ENCODE measurements at regions of chr4 and their contacts with region 1.

Region 1: DNA sequence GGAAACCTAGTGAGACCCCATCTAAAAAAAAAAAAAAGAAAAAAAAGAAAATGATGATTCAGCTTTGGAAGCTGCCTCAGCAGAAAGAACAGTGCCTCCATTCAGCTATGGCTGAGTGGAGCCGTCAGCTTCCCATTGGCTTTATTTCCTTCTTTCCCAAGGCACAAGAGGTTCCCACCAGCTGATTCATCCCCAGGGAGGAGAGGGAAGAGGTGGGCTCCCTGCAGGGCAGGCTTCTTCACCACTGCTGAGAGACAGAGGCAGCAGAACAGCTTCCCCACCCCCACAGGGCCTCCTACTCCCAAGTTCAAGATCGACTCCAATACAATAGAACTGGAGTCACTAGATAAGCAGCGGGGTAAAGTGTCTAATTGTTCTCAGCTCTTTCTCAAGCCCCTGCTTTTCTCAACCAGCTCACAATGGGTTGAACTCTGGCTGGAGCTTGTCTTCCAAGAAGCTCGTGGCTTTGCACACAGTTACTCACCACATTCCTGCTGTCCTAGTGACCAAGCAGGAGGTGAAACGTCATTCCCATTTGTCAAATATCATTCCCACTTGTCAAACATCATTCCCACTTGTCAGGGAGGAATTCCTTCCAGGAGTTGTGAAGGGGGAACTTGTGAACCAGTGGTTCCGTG is 47.8 kb downstream of the FHDC1 start:
- DNase-seq: peak; percentile 41 to 77
- H3K4me3 ChIP-seq: no peak overlapping the region
- H3K27ac ChIP-seq: peak overlapping the region; percentile 80
- H3K4me1 ChIP-seq: peaks cover 56% of the 10 kb centered on the region
- H3K27me3 ChIP-seq: no peaks in the 10 kb centered on the region
- CTCF ChIP-seq: no peak

Region 2: DNA sequence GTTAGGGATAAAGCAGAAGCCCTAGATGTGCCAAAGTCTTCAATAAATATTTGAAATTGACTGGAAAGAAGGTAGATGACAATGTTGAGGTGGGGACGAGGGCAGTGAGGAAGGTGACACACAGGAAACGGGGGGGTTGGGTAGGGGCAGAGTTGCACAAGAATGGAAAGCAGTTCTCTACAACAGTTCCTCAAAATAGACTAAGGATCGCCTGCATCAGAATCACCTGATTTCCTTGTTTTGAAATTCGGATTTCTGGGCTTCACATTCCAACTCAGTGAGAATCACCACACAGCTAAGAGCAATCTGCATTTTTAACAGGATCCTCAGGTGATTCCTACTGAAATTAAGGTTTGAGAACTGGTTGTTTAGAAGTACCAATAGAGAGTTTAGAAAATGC is 133.5 kb before region 1 on chr4:
- CTCF ChIA-PET with region 1: interaction called, 3 read pairs
- POLR2A ChIA-PET with region 1: no interaction called
- intact Hi-C with region 1: loop called (anchors 1 kb)
- DNase-seq: peak; percentile 19 to 64
- H3K4me3 ChIP-seq: no peak overlapping the region
- H3K27ac ChIP-seq: peak overlapping the region; percentile 74
- H3K4me1 ChIP-seq: peaks cover 20% of the 10 kb centered on the region
- H3K27me3 ChIP-seq: no peaks in the 10 kb centered on the region
- CTCF ChIP-seq: no peak

Region 3: DNA sequence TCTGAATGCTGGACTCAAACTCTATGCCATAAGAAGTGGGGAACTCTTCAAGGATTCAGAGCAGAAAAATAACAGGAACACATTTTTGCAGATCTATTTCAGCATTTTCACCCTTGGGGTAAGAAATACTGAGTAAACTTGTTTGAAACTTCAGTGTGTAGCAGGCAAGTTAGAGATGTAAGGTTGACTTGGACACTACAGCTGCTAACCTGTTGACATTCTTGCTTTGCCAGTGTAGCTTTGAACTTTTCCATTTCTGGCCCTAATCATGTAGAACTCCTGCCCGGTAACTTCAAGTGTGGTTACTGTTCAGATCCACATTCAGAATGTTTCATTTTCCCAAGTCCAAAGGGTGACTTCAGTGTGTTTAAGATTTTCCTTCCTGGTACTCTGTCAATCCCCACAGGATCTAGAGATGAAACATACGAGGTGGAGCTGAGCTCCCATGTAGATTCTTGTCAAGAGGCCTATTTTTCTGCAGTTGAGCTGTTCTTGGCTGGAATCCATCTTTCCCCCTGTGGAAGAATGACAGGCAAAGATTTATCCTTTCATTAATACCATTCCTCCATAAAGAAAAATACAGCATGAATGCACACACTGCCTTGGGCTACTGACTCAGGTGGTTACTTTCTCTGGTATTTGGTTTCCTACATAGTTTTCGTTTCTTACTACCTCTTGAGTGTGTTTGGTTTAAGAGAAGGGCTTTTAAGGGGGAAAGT is 13.6 kb before region 1 on chr4:
- CTCF ChIA-PET with region 1: interaction called, 3 read pairs
- POLR2A ChIA-PET with region 1: interaction called, 9 read pairs
- intact Hi-C with region 1: loop called (anchors 1 kb)
- DNase-seq: peak; percentile 77 to 92
- H3K4me3 ChIP-seq: no peak overlapping the region
- H3K27ac ChIP-seq: peak overlapping the region; percentile 88
- H3K4me1 ChIP-seq: peaks cover 59% of the 10 kb centered on the region
- H3K27me3 ChIP-seq: no peaks in the 10 kb centered on the region
- CTCF ChIP-seq: no peak

Region 4: GRCh38 chr4:153083447-153083947 is 99.6 kb after region 1 on chr4:
- CTCF ChIA-PET with region 1: interaction called, 4 read pairs
- POLR2A ChIA-PET with region 1: no interaction called
- intact Hi-C with region 1: loop called (anchors 1 kb)
- DNase-seq: peak; percentile 55 to 66
- H3K4me3 ChIP-seq: no peak overlapping the region
- H3K27ac ChIP-seq: peak overlapping the region; percentile 49; the same call in 1 of the 2 replicates
- H3K4me1 ChIP-seq: peaks cover 18% of the 10 kb centered on the region
- H3K27me3 ChIP-seq: no peaks in the 10 kb centered on the region
- CTCF ChIP-seq: peak; percentile 70

Region 5: DNA sequence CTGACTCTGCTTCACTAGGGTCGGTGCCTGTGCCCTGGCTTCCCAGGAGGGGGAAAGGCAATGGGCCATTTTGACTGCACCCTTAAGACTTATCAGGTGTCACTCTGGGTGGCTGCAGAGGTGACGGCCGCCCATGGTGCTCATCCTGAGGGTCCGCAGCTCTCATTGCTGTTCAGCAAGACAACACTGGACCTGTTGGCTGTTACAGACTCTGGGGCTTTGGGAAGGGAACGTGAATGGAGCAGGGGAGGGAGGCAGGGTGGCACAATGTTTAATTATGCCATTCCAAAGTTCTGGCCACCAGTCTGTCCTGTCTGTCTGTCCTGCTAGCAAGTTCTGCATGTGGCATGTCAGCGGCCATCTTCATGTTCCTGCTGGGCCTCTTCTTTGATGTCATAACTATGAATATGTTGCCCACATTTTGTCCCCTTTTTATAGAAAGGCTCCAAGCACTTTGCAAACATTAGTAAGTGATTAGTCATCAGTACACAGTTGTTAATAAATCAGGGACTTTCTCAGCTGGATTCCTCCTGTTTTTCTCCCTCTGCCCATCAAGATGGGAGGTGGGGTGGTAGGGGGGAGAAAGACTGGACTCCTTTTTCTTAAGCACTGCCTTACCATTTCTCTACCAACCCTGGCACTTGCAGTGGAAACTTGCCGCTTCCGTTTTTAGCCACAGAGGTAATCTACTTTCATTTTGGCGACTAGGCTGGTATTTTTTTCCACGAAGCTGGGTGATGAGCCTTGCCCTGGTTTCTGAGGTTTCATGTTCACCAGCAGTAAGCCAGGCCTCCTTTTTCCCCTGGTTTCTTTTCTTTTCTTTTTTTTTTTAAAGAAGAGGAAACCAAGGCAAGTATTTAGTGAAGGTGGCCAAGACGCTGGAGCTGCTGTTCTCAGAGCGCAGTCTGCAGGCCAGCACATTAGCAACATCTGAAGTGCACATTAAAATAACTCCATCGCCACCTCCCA is 131.7 kb after region 1 on chr4:
- CTCF ChIA-PET with region 1: no interaction called
- POLR2A ChIA-PET with region 1: interaction called, 5 read pairs
- intact Hi-C with region 1: loop called (anchors 2 kb)
- DNase-seq: peak; percentile 45 to 85
- H3K4me3 ChIP-seq: peak overlapping the region; percentile 32; the same call in 1 of the 2 replicates
- H3K27ac ChIP-seq: peak overlapping the region; percentile 54
- H3K4me1 ChIP-seq: peaks cover 16% of the 10 kb centered on the region
- H3K27me3 ChIP-seq: no peaks in the 10 kb centered on the region
- CTCF ChIP-seq: no peak

Region 6: GRCh38 chr4:153221783-153222706 is 238.2 kb after region 1 on chr4:
- CTCF ChIA-PET with region 1: no interaction called
- POLR2A ChIA-PET with region 1: no interaction called
- intact Hi-C with region 1: loop called (anchors 5 kb)
- DNase-seq: no peak
- H3K4me3 ChIP-seq: no peak overlapping the region
- H3K27ac ChIP-seq: no peak overlapping the region
- H3K4me1 ChIP-seq: peaks cover 43% of the 10 kb centered on the region
- H3K27me3 ChIP-seq: no peaks in the 10 kb centered on the region
- CTCF ChIP-seq: no peak

Measured in PC-9 (cell line).